Activated naive CD4-positive, alpha-beta T cell treated with anti-CD3 and anti-CD28 coated beads for 36 hours (primary cell): ENCODE measurements at regions of chr3 and their contacts with region 1.

Region 1: DNA sequence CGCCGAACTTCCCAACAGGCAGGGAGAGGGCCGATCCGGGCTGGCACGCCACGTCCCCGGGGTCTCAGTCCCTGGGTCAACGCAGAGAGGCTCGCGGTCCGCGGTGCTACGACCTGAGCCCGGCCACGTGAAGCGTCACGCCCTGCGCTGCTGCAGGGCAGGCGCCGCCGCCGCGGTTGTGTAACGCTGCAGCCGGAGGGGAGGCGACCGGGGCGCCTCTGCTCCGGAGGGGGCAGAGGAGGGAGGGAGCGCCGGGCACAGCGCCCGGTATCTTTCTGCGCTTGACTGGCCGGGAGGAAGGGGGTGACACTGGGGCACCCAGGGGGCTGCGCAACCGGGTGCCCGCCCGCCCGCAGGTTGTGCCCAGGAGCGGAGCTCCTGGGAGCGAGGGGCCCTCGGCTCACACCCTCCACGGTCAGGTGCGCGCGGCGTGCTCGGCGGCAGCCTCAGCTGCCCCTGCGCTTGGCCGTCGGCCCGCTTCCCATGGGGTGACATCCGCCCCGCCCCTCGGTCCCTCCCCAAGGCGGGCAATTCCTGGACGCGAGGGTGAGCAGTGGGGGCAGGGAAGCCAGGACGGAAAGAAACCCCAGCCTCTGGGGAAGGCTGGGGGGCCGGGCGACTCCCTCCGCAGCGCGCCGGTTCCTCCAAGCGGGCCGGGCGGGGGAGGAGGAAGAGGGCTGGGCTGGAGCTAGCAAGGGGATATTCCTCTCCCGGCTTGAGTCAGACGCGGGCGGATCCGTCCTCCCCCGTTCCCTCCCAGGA is 852 bp upstream of the BHLHE40 start:
- DNase-seq: peak; percentile 62
- H3K4me3 Mint-ChIP-seq: peak overlapping the region; percentile 96
- H3K27ac Mint-ChIP-seq: peak overlapping the region; percentile 98
- H3K4me1 Mint-ChIP-seq: peaks cover 53% of the 10 kb centered on the region
- H3K27me3 Mint-ChIP-seq: no peaks in the 10 kb centered on the region

Region 2: DNA sequence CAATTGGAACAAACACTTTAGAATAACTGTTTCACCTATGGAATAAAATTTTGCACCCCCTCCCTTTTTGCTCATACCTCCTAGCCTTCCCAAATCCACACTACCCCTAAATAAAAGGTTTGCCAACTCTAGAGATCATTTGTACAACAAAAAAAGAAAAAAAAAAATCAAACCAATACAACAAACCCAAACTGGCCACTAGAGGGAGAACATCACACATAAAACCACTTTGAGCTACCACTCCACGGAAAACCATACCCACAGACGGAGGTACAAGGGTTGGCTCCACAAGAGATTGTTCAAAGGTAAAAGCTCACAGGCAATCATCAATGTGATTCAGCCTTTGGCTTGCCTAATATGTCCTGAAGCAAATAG is 627.6 kb before region 1 on chr3:
- CTCF ChIA-PET with region 1: no interaction called
- intact Hi-C with region 1: loop called (anchors 1 kb)
- DNase-seq: peak; percentile 59
- H3K4me3 Mint-ChIP-seq: peak overlapping the region; percentile 42
- H3K27ac Mint-ChIP-seq: peak overlapping the region; percentile 54
- H3K4me1 Mint-ChIP-seq: peaks cover 17% of the 10 kb centered on the region
- H3K27me3 Mint-ChIP-seq: no peaks in the 10 kb centered on the region

Region 3: GRCh38 chr3:4712143-4712542 is 266.2 kb before region 1 on chr3:
- CTCF ChIA-PET with region 1: interaction called, 48 read pairs
- intact Hi-C with region 1: loop called (anchors 1 kb)
- DNase-seq: no peak
- H3K4me3 Mint-ChIP-seq: no peak overlapping the region
- H3K27ac Mint-ChIP-seq: no peak overlapping the region
- H3K4me1 Mint-ChIP-seq: peaks cover 2% of the 10 kb centered on the region
- H3K27me3 Mint-ChIP-seq: no peaks in the 10 kb centered on the region

Region 4: DNA sequence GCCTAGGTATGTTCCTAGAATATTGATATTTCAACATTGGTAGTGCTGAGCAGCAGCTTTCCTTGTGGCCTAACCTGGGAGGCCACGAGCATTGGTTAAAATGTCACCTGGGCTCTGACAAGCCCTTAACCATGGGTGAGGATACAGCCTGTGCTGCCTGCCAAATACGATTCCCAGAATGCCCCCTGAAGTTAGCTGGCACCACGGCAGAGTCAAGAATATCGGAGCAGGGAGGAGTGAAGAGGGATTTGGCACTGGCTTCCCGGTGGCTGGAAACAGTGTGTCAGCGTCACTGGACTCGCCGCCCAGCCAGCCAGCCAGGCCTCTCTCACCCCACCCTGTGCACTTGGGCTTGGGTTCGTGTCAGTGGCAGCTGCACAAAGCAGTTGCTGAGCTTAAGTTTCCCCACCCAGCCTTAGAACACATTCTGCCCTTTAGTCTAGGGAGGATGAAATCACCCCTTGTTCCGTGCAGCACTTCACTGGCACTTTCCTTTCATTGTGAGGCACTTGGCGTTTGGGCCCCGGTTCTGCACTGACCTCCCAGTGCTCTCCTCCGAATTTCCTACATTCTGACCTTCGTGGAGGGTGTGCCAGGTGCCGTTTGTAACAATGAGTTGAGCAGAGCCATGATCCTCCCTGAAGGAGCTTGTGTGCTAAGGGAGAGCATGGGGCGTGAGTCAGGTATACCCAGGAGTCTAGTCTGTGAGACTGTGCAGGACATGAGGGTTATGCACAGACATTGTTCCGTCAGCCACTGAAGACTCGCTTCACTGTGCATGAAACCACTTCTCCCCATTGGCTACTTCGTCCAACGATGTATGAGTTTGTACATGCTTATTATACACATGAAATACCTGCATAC is 151.9 kb before region 1 on chr3:
- CTCF ChIA-PET with region 1: interaction called, 17 read pairs
- intact Hi-C with region 1: loop called (anchors 1 kb)
- DNase-seq: no peak
- H3K4me3 Mint-ChIP-seq: no peak overlapping the region
- H3K27ac Mint-ChIP-seq: peak overlapping the region; percentile 57
- H3K4me1 Mint-ChIP-seq: peaks cover 93% of the 10 kb centered on the region
- H3K27me3 Mint-ChIP-seq: no peaks in the 10 kb centered on the region

Region 5: DNA sequence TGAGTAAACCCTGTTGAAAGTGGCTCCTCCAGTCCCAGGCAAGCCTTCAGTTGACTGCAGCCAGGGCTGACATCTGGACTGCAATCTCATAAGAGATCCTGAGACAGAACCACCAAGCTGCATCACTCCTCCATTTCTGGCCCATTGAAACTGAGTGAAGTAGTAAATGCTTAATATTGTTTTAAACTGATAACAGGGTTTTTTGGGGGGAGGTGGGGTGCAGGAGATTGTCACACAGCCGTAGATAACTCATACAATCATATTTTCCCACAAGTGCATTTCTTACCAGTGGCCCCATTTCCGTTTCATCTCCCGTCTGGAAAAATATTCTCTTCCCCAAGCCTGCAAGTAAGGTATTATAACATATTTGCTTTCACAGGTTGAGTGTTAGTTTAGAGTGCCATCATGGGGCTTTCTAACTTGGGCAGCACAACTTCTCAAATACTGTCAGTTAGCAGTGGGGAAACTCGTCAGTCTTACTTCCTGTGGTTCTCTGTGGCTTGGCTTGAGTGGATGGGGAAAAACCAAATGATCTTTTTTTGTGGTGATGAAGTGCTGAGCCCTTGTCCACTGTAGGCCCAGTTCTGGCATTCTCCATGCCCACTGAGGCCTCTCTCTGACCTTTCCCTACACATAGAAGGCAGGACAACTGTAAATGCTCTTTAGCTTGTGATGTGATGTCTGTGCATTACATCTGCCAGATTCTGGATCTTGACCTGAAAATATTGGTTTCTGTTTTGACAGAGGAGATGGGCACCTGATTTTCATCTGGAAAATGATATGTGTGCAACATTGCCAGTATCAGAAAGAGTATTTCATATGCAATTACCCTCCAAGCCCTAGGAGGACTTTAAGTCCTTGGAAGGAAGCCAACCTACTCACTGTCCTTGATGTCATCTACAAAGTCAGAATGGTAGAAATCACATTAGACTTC is 89.2 kb before region 1 on chr3:
- CTCF ChIA-PET with region 1: interaction called, 14 read pairs
- intact Hi-C with region 1: loop called (anchors 1 kb)
- DNase-seq: peak; percentile 61
- H3K4me3 Mint-ChIP-seq: no peak overlapping the region
- H3K27ac Mint-ChIP-seq: peak overlapping the region; percentile 85
- H3K4me1 Mint-ChIP-seq: peaks cover 40% of the 10 kb centered on the region
- H3K27me3 Mint-ChIP-seq: no peaks in the 10 kb centered on the region

Region 6: DNA sequence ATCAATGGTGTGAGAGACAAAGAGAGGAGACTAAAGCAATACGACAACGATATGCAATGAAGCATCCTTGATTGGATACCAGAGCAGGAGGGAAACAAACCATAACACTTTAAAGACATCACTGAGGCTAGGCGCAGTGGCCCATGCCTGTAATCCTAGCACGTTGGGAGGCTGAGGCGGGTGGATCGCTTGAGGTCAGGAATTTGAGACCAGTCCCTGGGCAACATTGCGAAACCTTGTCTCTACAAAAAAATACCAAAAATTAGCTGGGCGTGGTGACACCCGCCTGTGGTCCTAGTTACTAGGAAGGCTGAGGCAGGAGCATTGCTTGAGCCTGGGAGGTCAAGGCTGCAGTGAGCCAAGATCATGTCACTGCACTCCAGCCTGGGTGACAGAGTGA is 33.1 kb before region 1 on chr3:
- CTCF ChIA-PET with region 1: no interaction called
- intact Hi-C with region 1: no loop called
- DNase-seq: no peak
- H3K4me3 Mint-ChIP-seq: no peak overlapping the region
- H3K27ac Mint-ChIP-seq: no peak overlapping the region
- H3K4me1 Mint-ChIP-seq: no peaks in the 10 kb centered on the region
- H3K27me3 Mint-ChIP-seq: no peaks in the 10 kb centered on the region

Region 7: DNA sequence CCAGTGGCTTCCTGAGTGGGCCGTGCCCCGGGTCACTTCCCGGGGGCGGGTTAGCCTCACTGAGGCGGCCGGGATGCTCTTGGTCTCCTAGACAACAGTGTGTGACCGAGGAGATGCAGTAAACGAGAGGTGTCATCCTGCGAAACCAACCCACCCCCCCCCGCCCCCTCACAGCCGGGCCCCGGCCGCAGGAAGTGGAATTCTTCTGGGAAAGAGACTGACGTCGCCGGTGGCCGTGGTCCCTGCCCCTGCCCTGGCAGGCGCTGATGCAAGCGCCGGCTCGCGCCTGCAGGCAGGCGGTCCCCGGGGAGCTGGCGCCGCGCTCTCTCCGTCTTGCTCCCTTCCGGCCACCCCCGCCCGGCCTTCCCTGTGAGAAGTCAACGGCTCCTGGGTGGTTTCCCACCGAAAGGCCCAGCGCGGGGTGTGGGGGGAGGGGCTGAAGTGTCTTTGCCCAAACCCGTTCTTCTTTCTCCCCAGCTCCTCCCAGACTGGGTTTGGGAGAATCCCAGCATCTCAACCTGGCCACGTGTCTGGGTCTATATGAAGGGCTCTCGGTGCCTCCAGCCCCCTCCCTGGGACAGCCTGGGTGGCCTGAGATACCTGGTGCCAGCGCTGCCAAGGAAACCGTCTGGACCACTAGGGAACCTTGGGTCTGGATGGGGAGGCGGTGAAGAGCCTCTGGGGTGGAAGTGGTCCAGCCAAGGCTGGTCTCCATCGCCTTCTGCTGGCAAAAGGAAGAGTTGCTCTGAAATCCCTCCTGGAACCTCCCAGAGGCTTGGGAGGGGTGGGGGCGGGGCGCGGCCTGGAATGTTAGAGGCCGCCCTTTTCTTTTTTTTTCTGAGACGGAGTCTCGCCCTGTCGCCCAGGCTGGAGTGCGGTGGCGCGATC is 48.2 kb after region 1 on chr3:
- CTCF ChIA-PET with region 1: interaction called, 67 read pairs
- intact Hi-C with region 1: loop called (anchors 1 kb)
- DNase-seq: peak; percentile 86
- H3K4me3 Mint-ChIP-seq: peak overlapping the region; percentile 74
- H3K27ac Mint-ChIP-seq: peak overlapping the region; percentile 80
- H3K4me1 Mint-ChIP-seq: peaks cover 38% of the 10 kb centered on the region
- H3K27me3 Mint-ChIP-seq: no peaks in the 10 kb centered on the region

Region 8: GRCh38 chr3:5194341-5195159 is 216.2 kb after region 1 on chr3:
- CTCF ChIA-PET with region 1: interaction called, 3 read pairs
- intact Hi-C with region 1: loop called (anchors 2 kb)
- DNase-seq: peak; percentile 66
- H3K4me3 Mint-ChIP-seq: peak overlapping the region; percentile 25
- H3K27ac Mint-ChIP-seq: peak overlapping the region; percentile 98
- H3K4me1 Mint-ChIP-seq: peaks cover 84% of the 10 kb centered on the region
- H3K27me3 Mint-ChIP-seq: no peaks in the 10 kb centered on the region